Naive thymus-derived CD4-positive, alpha-beta T cell (primary cell): ENCODE measurements at regions of chr2 and their contacts with region 1.

Region 1: GRCh38 chr2:74421221-74421870 is at the starts of genes C2orf81 and WDR54:
- DNase-seq: peak; percentile 86 to 96 (median 95)
- ATAC-seq: peak; percentile 97
- H3K4me3 ChIP-seq: peak within 1 kb of the TSS; percentile 96
- H3K4me3 Mint-ChIP-seq: peak within 1 kb of the TSS; percentile 90 to 100 (median 98)
- H3K27ac ChIP-seq: peak within 1 kb of the TSS; percentile 97
- H3K27ac Mint-ChIP-seq: peak within 1 kb of the TSS; percentile 96 to 100 (median 99)
- H3K4me1 ChIP-seq: peaks cover 4 to 19% of the 10 kb centered on the region in 2 donors
- H3K4me1 Mint-ChIP-seq: peaks cover 14 to 44% (median 36%) of the 10 kb centered on the region in 7 donors
- H3K27me3 ChIP-seq: no peaks in the 10 kb centered on the region
- H3K27me3 Mint-ChIP-seq: no peaks in the 10 kb centered on the region
- total RNA-seq, gene C2orf81: 4.3 to 10.5 (median 6.8) TPM
- total RNA-seq, gene WDR54: 26.5 to 78.5 (median 30.8) TPM

Region 2: DNA sequence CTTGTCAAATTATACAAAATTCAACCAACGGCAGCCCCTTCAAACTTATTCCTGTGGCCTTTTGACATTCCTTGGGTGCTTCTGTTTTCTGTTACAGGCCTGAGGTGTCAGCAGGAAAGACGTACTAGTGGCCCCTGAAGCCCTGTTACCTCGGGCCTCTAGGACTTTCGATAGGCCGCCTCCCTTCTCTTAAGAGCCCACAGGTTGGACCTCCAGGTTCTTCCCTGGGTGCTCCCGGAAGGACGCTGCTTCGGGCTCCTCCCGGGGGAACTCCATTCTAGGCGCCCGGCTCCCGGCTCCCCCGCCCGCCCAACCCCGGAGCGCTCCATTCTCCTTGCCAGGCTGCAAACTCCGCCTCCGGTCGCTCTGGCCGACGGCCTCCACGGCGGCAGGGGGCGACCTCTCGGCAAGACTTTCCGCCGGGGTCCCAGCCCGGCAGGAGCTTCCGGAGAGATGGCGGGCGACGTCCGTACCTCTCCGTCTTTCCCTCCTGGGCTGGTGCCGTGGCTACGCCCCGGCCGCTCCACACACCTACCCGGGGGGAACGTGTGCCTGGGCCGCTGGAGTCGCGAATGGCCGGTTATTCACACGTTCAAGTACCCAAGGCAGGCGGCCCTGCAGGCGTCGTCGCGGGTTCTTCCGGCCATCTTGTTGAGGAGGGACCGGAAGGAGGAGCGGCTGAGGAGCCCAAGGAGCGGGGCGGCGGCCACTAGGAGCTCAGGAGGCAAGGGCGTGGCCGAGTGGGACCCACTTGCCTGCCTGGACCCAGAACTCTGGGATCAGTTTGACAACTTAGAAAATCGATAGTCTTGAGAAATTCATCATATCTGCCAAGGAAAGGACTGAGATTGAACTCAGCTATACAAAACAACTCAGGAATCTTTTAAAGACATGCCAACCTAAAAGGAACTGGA is 301.2 kb before region 1 on chr2:
- CTCF ChIA-PET with region 1: no interaction called
- POLR2A ChIA-PET with region 1: no interaction called
- intact Hi-C with region 1: loop called in 1 of 2 experiments (anchors 1 kb)
- DNase-seq: peak; percentile 69 to 91 (median 80)
- ATAC-seq: peak; percentile 98
- H3K4me3 ChIP-seq: peak overlapping the region; percentile 89
- H3K4me3 Mint-ChIP-seq: peak overlapping the region; percentile 82 to 92 (median 88)
- H3K27ac ChIP-seq: peak overlapping the region; percentile 83
- H3K27ac Mint-ChIP-seq: peak overlapping the region; percentile 79 to 96 (median 91)
- H3K4me1 ChIP-seq: no peaks in the 10 kb centered on the region
- H3K4me1 Mint-ChIP-seq: peaks cover 8 to 12% (median 9%) of the 10 kb centered on the region in 7 donors
- H3K27me3 ChIP-seq: no peaks in the 10 kb centered on the region
- H3K27me3 Mint-ChIP-seq: peaks cover 0 to 5% (median 2%) of the 10 kb centered on the region in 5 donors

Region 3: DNA sequence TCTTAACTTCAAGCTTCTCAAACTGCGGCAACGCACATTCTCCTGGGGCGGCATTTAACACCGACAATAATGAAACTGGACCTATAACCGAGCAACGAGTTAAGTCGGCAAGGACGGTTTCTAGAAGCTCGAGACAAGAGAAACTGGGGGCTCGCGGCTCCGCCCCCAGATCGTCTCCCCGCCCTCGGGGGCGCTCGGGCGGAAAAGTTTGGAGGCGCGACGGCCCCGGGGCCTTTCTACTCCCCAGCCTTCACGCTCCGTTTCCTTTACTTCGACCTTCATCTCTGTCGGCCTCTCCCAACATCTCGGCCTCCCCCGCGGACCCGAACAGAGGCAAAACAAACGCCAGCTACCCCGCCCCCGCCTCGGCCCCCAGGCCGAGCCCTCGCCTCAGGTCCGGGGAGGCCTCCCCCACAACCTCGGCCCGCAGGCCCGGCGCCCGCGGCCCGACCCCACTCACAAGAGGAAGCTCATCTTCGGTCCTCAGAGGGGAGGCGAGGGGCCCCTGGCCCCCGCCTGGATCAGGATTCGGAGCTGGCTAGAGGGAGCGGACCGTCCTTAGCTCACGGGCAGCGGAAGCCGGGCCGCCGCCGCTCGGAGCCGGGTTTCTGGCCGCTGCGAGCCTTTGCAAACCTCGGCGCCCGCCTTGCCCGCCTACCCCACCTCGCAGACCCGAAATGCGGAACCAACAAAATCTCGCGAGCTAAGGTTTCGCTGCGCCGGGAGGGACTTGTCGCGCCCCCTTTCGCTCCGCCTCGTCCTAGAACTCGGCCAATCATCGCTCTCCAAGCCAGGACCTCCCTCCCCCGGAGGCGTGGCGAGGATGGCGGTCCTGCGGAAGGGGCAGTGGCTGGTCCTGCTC is 242.9 kb before region 1 on chr2 and contains the start of gene MOB1A:
- CTCF ChIA-PET with region 1: interaction called, 3 read pairs
- POLR2A ChIA-PET with region 1: interaction called, 3 read pairs
- intact Hi-C with region 1: loop called in 1 of 2 experiments (anchors 1 kb)
- DNase-seq: peak; percentile 94 to 98 (median 97)
- ATAC-seq: peak; percentile 97
- H3K4me3 ChIP-seq: peak within 1 kb of the TSS; percentile 89
- H3K4me3 Mint-ChIP-seq: peak within 1 kb of the TSS; percentile 86 to 95 (median 91)
- H3K27ac ChIP-seq: peak within 1 kb of the TSS; percentile 97
- H3K27ac Mint-ChIP-seq: peak within 1 kb of the TSS; percentile 82 to 95 (median 90)
- H3K4me1 ChIP-seq: peaks cover 25 to 37% of the 10 kb centered on the region in 2 donors
- H3K4me1 Mint-ChIP-seq: peaks cover 32 to 46% (median 35%) of the 10 kb centered on the region in 7 donors
- H3K27me3 ChIP-seq: no peaks in the 10 kb centered on the region
- H3K27me3 Mint-ChIP-seq: no peaks in the 10 kb centered on the region
- total RNA-seq, gene MOB1A: 113 to 185 (median 140) TPM

Region 4: DNA sequence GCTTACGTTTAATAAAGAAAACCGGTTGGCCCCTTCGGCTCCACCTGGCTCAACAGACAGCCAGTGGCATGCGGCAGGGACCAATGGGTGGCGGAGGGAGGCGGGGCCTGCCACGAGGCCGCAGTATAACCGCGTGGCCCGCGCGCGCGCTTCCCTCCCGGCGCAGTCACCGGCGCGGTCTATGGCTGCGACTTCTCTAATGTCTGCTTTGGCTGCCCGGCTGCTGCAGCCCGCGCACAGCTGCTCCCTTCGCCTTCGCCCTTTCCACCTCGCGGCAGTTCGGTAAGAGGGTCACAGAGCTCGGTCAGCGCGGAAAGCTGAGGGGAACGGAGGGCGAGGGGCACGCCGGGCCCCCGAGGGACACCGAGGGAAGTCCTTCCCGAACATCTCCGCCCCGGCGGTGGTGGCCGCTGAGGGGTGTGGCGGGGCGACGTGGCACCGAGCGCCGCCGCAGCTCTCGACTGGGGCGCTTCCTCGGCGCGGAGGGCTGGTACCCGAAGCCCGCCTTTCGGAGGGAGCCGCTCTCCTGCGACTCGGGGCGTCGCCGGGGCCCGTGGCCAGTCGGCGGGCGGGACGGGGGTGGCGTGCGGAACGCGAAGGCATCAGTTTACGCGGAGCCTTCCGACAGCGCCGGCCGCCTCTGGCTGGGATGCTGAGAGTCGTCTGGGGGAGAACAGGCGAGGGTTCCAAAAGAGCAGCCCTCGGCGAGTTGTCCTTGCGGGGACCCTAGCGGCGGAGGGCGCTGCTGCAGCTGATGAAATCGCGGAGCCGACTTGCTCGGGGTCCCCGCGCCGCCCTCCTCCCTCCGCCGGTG is 222.7 kb before region 1 on chr2 and contains the start of gene MTHFD2:
- CTCF ChIA-PET with region 1: no interaction called
- POLR2A ChIA-PET with region 1: interaction called, 4 read pairs
- intact Hi-C with region 1: loop called in 1 of 2 experiments (anchors 2 kb)
- DNase-seq: peak; percentile 76 to 93 (median 82)
- ATAC-seq: peak; percentile 94
- H3K4me3 ChIP-seq: peak within 1 kb of the TSS; percentile 65
- H3K4me3 Mint-ChIP-seq: peak within 1 kb of the TSS; percentile 90 to 100 (median 96)
- H3K27ac ChIP-seq: peak within 1 kb of the TSS; percentile 88
- H3K27ac Mint-ChIP-seq: peak within 1 kb of the TSS; percentile 94 to 100 (median 97)
- H3K4me1 ChIP-seq: peaks cover 13 to 16% of the 10 kb centered on the region in 2 donors
- H3K4me1 Mint-ChIP-seq: peaks cover 29 to 50% (median 35%) of the 10 kb centered on the region in 7 donors
- H3K27me3 ChIP-seq: no peaks in the 10 kb centered on the region
- H3K27me3 Mint-ChIP-seq: no peaks in the 10 kb centered on the region
- total RNA-seq, gene MTHFD2: 14.5 to 186 (median 25.1) TPM

Region 5: DNA sequence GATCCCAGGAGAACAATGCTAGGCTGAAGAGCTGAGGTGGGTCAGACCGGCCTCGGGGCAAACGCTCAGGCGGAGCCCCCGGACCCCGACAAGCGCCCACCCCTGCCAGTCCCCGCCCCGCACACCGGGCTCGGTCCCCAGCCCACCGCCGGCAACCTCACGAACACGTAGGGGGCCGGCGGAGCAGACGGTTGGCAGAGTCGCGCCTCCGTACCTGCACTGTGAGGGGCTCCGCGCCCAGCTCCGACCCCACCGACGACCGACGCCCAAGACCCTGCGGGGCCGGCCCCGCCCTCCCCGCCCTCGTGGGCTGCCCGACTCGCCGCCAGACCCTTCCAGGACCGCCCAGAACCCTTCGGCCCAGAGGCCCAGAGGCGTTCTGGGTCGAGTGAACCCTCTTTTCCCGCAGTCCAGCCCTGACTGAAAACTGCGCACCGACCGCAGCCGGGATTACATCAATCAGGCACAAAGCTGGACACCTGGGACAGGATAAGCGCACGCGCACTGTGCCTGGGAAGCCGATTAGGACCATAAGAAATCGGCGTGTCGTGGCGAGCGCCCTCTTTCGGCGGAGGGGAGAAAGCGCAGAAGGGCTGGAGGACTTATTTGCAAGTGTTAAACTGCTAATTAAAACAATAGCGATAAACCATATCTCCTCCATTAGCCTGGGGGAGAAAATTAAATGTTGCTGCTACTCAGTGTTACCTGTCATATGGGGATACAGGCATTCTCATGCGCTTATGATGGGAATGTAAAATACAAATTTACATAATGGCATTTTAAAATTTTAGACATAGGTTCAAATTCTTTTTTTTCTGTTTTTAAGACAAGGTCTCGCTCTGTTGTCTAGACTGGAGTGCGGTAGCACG is 29.5 kb before region 1 on chr2:
- CTCF ChIA-PET with region 1: interaction called, 10 read pairs
- POLR2A ChIA-PET with region 1: interaction called, 23 read pairs
- intact Hi-C with region 1: loop called (anchors 1 kb)
- DNase-seq: peak; percentile 89 to 99 (median 93)
- ATAC-seq: peak; percentile 97
- H3K4me3 ChIP-seq: peak overlapping the region; percentile 78
- H3K4me3 Mint-ChIP-seq: peak overlapping the region in 4 of 10 donors; percentile 40 to 100 (median 92)
- H3K27ac ChIP-seq: peak overlapping the region; percentile 91
- H3K27ac Mint-ChIP-seq: peak overlapping the region in 8 of 9 donors; percentile 98 to 100 (median 99)
- H3K4me1 ChIP-seq: peaks cover 8 to 25% of the 10 kb centered on the region in 2 donors
- H3K4me1 Mint-ChIP-seq: peaks cover 0 to 15% (median 5%) of the 10 kb centered on the region in 7 donors
- H3K27me3 ChIP-seq: no peaks in the 10 kb centered on the region
- H3K27me3 Mint-ChIP-seq: peaks cover 0 to 14% (median 5%) of the 10 kb centered on the region in 5 donors

Region 6: DNA sequence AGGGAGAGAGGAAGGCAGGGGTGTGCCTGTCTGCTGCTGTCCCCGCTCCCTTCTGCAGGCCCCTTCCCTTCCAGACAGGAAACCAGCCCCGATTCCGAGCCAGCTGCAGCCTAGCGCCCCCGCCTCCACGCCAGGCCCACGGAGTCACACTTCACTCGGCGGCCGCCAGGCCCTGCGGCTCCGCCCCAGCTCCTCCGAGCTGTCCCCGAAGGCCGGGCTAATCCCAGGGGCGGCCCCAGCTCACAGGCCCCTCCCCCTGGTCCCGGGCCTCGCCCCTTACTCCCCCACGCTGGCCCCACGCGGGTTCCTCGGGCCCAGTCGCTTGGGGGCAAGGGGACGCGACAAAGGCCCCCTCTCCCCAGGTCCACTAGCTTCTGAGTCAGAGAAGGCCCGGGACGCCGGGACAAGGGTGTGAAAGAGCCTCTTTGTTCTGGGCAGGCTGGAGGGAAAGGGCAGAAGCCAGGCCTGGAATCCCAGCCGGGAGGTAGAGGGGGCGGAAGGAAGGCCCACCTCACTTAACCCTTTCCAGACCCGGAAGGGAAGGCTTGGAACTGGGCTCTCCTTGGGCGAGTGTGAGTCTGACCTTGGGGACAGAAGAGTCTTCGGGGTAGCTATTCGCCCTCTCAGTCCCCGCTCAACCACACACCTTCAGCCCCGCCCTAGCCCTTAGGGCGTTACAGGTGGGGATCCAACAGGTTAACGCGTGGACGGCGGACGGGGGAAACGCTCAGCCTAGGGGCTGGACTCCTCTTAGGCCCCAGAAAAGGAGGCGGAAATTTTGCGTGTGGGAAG is 19.2 kb after region 1 on chr2:
- CTCF ChIA-PET with region 1: no interaction called
- POLR2A ChIA-PET with region 1: no interaction called
- intact Hi-C with region 1: loop called in 1 of 2 experiments (anchors 2 kb)
- DNase-seq: peak in 1 of 9 donors; percentile 61
- ATAC-seq: peak; percentile 84
- H3K4me3 ChIP-seq: no peak overlapping the region
- H3K4me3 Mint-ChIP-seq: peak overlapping the region; percentile 34 to 83 (median 67)
- H3K27ac ChIP-seq: no peak overlapping the region
- H3K27ac Mint-ChIP-seq: no peak overlapping the region
- H3K4me1 ChIP-seq: peaks cover 0 to 8% of the 10 kb centered on the region in 2 donors
- H3K4me1 Mint-ChIP-seq: peaks cover 0 to 20% (median 12%) of the 10 kb centered on the region in 7 donors
- H3K27me3 ChIP-seq: peaks cover 0 to 13% of the 10 kb centered on the region in 2 donors
- H3K27me3 Mint-ChIP-seq: peaks cover 19 to 61% (median 30%) of the 10 kb centered on the region in 5 donors

Region 7: GRCh38 chr2:74472086-74472944 is 51.0 kb after region 1 on chr2 and contains the start of gene MRPL53:
- CTCF ChIA-PET with region 1: no interaction called
- POLR2A ChIA-PET with region 1: interaction called, 3 read pairs
- intact Hi-C with region 1: loop called in 1 of 2 experiments (anchors 1 kb)
- DNase-seq: peak; percentile 91 to 98 (median 95)
- ATAC-seq: peak; percentile 96
- H3K4me3 ChIP-seq: peak within 1 kb of the TSS; percentile 89
- H3K4me3 Mint-ChIP-seq: peak within 1 kb of the TSS; percentile 88 to 99 (median 98)
- H3K27ac ChIP-seq: peak within 1 kb of the TSS; percentile 91
- H3K27ac Mint-ChIP-seq: peak within 1 kb of the TSS; percentile 94 to 99 (median 98)
- H3K4me1 ChIP-seq: peaks cover 14 to 19% of the 10 kb centered on the region in 2 donors
- H3K4me1 Mint-ChIP-seq: peaks cover 9 to 32% (median 29%) of the 10 kb centered on the region in 7 donors
- H3K27me3 ChIP-seq: no peaks in the 10 kb centered on the region
- H3K27me3 Mint-ChIP-seq: no peaks in the 10 kb centered on the region
- total RNA-seq, gene MRPL53: 45.7 to 108 (median 94.5) TPM